GM13977 (cell line): ENCODE measurements at regions of chr1 and their contacts with region 1.

Region 1: DNA sequence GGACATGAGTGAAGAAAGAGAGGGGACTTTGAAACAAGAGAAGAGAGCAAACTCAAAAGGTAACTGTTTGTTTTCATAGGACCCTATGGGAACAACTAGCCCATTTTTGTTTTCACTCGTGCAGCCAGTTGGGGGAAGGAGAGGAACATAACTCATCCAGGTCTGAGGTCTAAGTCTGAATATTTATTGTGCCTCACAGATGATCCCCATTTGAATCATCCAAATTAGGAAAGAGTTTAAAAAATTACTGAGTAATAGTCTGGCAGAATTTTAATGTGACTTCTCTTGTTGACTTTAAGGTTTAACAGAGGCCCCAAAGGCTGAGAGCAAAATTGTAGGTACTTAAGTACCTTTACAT is 10.4 kb upstream of the TSPAN2 start:
- DNase-seq: no peak
- CTCF ChIP-seq: no peak

Region 2: GRCh38 chr1:114986286-114986685 is 113.4 kb before region 1 on chr1:
- in situ Hi-C with region 1: loop called (anchors 10 kb)
- DNase-seq: no peak
- CTCF ChIP-seq: no peak